Activated naive CD4-positive, alpha-beta T cell treated with anti-CD3 and anti-CD28 coated beads, Interleukin-2, amount 10 ng/mL, durations not matched to agents 7 days and 5 days (primary cell): ENCODE measurements at regions of chr5 and their contacts with region 1.

Region 1: DNA sequence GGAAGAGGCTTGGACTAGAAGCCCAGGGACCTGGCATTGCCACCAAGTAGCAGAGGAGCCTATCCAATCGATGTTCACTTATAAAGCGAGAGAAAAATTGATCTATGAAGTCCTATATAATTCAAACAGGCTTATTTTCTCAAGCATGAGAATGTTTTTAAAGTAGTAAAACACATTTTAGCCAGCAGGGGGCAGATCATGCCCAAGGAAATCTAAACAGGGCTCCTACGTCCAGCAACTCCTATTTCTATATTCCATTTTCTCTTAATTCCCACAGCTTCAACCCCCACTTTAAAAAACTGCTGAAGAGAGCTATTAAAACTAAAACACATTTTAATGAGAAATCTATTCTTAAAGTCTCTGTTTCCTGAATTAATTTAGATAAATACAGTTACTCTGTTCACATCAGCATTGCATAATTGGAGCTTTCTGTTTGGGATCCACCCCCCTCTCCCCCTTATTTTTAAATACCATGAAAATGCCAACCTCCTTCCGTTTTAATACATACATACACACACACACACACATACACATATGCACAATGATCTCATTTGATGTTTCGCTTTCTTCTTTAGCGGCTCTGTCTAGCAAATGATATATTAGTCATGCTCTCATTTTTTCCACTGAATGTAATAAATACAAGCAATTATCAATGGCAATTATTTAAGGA is 144.9 kb downstream of the MYO10 start:
- DNase-seq: peak; percentile 28
- H3K4me3 Mint-ChIP-seq: no peak overlapping the region
- H3K27ac Mint-ChIP-seq: no peak overlapping the region
- H3K4me1 Mint-ChIP-seq: peaks cover 2% of the 10 kb centered on the region
- H3K27me3 Mint-ChIP-seq: peaks cover 3% of the 10 kb centered on the region

Region 2: DNA sequence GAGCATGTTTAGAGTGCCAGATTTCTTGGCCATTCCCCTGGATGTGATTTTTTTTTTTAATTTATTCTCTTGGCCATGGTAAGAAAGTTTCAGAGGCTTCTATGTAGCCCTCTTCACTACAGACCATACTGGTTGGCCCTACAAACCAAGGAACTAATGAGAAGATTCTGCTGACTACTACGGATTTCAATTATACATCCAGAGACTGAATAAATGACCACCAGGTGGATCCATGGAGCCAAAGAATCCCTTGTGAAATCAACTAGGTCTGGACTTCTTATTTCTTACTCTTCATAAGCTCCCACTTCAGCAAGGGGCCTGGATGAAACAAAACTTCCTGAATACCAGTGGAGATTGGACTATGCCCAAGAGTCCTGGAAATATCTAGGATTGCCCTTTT is 353.2 kb before region 1 on chr5:
- CTCF ChIA-PET with region 1: no interaction called
- DNase-seq: no peak
- H3K4me3 Mint-ChIP-seq: no peak overlapping the region
- H3K27ac Mint-ChIP-seq: no peak overlapping the region
- H3K4me1 Mint-ChIP-seq: no peaks in the 10 kb centered on the region
- H3K27me3 Mint-ChIP-seq: peaks cover 4% of the 10 kb centered on the region

Region 3: DNA sequence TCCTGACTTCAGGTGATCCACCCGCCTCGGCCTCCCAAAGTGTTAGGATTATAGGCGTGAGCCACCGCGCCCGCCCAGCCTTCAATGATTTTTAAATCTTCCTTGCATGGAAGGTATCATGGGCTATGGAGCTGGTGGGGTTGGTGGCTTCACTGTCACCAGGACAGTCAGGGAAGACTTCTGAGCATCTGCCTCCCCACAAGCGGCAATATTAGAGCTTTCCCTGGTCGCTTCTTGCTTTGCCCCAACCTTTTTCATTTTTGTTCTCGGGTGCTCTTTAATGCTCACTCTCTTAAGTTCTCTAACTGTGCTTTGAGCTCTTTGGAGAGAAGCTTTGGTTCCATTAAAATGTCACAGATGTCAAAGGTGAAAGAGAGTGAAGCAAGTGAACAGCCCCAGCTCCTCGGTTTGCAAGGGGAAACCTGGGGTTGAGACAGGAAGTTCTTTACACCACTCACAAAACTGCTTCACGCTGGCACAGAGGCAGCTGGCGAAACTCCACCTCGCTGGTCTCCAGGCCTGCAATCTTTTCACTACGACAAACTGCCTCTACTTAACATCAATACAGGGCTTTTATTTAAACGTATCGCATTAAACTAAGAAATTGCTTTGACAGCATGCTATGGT is 31.9 kb before region 1 on chr5:
- CTCF ChIA-PET with region 1: no interaction called
- DNase-seq: peak; percentile 49
- H3K4me3 Mint-ChIP-seq: no peak overlapping the region
- H3K27ac Mint-ChIP-seq: peak overlapping the region; percentile 55
- H3K4me1 Mint-ChIP-seq: peaks cover 12% of the 10 kb centered on the region
- H3K27me3 Mint-ChIP-seq: peaks cover 2% of the 10 kb centered on the region

Region 4: GRCh38 chr5:16842896-16843295 is 51.7 kb after region 1 on chr5:
- CTCF ChIA-PET with region 1: no interaction called
- DNase-seq: no peak
- H3K4me3 Mint-ChIP-seq: no peak overlapping the region
- H3K27ac Mint-ChIP-seq: no peak overlapping the region
- H3K4me1 Mint-ChIP-seq: no peaks in the 10 kb centered on the region
- H3K27me3 Mint-ChIP-seq: peaks cover 7% of the 10 kb centered on the region

Region 5: DNA sequence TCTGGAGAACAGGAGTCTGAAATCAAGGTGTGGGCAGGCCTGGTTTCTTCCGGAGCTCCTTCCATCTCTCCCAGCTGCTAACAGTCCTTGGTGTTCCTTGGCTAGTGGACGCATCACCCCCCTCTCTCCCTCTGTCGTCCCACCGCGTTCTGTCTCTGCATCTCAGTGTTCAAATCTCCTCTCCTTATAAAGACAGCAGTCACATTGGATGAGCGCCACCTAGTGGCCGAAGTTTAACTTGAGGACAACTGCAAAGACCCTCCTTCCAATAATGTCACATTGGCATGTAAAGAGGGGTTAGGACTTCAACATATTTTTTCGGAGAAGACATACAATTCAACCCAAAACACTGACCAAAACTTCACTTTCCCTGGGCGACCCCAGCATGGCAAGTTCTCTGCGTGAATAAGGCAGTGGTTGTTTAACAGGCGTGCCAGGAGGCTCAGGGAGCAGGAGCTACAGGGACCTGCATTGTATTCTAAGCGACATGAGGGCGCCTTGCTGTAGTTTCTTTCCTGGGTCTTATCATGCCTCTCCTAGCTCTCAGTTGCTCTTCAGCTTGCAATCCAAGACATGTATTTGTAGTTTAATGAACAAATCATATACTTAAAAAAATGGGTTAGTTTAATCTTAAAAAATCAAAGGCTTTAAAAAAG is 398.3 kb after region 1 on chr5:
- CTCF ChIA-PET with region 1: interaction called, 37 read pairs
- DNase-seq: peak; percentile 67
- H3K4me3 Mint-ChIP-seq: no peak overlapping the region
- H3K27ac Mint-ChIP-seq: no peak overlapping the region
- H3K4me1 Mint-ChIP-seq: no peaks in the 10 kb centered on the region
- H3K27me3 Mint-ChIP-seq: no peaks in the 10 kb centered on the region